Psoas muscle (tissue), 8 donors: ENCODE measurements at regions of chr13 and their contacts with region 1.

Region 1: DNA sequence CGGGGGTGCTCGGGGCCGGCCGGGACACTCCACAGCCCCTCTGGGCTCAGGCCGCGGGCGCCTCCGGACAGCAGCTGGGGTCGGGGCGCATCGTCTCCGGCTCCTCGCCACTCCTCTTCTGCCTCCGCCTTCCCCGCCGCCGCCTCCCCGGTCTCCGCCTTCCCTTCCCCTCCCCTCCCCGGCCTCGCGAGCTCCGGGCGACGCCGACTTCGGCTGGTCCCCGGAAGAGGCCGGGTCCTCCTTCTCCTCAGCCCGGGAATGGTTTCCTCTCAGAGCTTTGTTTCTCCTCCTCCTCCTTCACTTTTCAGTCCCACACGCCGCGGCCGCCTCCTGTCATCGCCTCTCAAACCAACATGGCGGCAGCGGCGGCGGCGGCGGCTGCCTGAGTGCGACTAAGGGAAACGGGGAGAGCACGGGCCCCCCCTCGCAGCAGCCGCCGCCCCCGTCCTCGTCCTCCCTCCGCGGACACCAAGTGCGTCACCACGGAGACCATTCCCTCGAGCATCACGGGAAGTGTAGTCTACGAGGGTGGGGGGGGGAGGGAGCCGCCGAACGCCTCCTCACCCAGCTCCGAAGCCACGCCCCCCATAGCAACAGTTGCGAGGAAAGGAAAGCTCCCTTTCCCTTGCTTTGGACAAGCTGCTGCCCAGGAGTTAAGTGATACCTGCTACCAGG is at the start of gene UBL3:
- DNase-seq: peak; percentile 96 to 98
- ATAC-seq: peak; percentile 95 to 98 (median 97)
- H3K4me3 ChIP-seq: peak within 1 kb of the TSS; percentile 92
- H3K27ac ChIP-seq: peak within 1 kb of the TSS; percentile 99
- H3K4me1 ChIP-seq: peaks cover 27% of the 10 kb centered on the region
- H3K27me3 ChIP-seq: no peaks in the 10 kb centered on the region
- CTCF ChIP-seq: no peak
- total RNA-seq, gene UBL3: 20.7 to 26.2 (median 24.5) TPM

Region 2: GRCh38 chr13:29508130-29508875 is 342.1 kb before region 1 on chr13:
- intact Hi-C with region 1: loop called in 1 of 2 experiments (anchors 10 kb)
- DNase-seq: peak; percentile 83 to 91
- ATAC-seq: peak; percentile 82 to 96 (median 88)
- H3K4me3 ChIP-seq: no peak overlapping the region
- H3K27ac ChIP-seq: no peak overlapping the region
- H3K4me1 ChIP-seq: peaks cover 5% of the 10 kb centered on the region
- H3K27me3 ChIP-seq: peaks cover 0 to 38% (median 13%) of the 10 kb centered on the region in 3 donors
- CTCF ChIP-seq: peak; percentile 97

Region 3: DNA sequence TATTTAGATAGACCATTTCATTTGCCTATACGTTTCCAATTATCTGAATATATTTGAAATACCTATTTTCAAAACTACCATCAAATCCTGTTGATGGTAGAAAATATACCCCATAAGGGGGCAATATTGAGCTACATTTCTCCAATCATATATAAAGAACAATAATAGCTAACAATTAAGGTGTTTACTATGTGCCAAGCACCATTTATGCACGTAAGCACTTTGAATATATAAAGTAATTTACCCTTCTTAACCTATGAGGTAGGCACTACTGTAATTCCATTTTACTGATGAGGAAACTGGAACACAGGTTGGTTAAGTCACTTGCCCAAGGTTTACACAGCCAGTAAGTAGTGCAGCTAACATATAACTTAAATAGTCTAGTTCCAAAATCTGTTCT is 79.1 kb before region 1 on chr13:
- intact Hi-C with region 1: loop called (anchors 5 kb)
- DNase-seq: no peak
- ATAC-seq: peak in 2 of 4 donors; percentile 35 to 67
- H3K4me3 ChIP-seq: no peak overlapping the region
- H3K27ac ChIP-seq: no peak overlapping the region
- H3K4me1 ChIP-seq: no peaks in the 10 kb centered on the region
- H3K27me3 ChIP-seq: no peaks in the 10 kb centered on the region
- CTCF ChIP-seq: peak; percentile 62

Region 4: DNA sequence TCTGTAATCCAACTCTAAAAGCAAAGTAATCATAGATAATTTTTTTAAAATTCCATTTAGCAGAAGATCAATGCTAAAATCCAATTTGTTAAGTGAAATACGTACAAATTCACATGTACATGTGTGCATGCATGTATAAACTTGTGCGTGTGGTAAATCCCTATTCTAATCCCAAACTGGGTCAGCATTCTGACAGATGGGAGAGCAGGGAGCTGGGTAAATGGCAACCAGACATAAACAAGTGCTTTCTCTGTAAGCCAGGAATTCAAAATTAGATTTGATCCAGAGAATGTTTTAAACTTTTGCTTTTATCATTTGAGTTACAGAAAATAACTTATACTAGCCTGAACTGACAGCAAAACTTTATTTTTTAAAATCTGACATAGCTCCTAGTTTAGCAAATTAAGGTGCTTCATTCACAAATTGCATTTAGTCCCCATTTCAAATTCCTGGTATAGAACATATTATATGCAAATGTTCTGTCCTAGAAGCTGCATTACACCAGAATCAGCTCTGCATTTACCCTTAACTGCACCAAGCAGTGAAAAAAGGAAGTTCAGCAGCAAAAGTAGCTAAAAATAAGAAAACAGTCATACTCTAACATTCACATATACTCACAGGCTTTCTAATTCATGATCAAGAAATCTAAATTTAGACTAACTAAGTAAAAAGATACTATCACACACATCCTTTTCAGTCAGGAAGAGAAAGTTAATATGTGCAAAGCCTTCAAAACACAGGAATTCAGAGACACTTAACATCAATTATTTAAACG is 32.6 kb before region 1 on chr13:
- intact Hi-C with region 1: no loop called
- DNase-seq: no peak
- ATAC-seq: peak; percentile 70 to 96 (median 83)
- H3K4me3 ChIP-seq: peak overlapping the region; percentile 44
- H3K27ac ChIP-seq: peak overlapping the region; percentile 70
- H3K4me1 ChIP-seq: peaks cover 78% of the 10 kb centered on the region
- H3K27me3 ChIP-seq: no peaks in the 10 kb centered on the region
- CTCF ChIP-seq: no peak

Region 5: DNA sequence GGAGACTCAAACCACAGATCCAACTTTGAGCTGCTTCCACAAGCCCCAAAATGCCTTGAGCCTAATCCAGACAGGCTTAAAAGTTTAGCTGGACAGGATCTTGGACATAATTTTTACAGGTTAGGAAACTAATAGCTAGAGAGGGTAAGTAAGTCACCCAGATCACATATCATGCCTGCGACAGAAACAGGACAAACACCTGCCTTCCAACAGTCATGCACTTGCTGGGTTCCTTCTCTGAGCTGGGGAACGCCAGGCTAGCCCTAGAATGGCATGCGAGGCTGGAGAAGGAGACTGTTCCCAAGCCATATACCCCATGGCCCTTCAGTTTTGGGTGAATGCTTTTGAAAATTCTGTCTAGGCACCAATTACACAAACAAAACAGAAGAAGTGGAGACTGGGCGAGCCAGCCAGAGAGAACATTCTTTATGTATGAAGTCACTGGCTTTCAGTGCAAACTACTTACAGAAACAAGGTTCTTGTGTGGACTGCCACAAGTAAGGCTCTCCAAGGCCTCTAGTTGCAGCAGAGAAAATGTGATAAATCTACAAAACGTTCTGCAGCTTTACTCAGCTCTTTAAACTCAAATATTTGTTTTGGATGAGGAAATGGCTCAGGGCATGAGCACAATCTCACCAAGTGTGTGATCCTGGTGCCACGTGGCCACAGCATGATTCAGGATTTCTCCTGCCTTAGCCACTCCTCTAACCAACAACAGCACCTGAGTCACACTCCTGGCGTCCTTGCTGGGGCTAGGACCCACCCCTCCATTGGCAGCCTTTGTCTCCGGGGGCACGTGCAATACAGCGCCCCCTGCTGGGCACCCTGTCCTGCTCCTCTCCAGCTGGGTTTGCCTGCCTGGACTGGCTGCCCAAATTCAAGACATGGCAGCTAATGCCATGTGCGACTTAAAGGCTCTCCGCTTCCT is 73.5 kb after region 1 on chr13:
- intact Hi-C with region 1: loop called in 1 of 2 experiments (anchors 5 kb)
- DNase-seq: peak; percentile 76 to 79
- ATAC-seq: peak; percentile 77 to 92 (median 86)
- H3K4me3 ChIP-seq: no peak overlapping the region
- H3K27ac ChIP-seq: peak overlapping the region; percentile 77
- H3K4me1 ChIP-seq: peaks cover 18% of the 10 kb centered on the region
- H3K27me3 ChIP-seq: no peaks in the 10 kb centered on the region
- CTCF ChIP-seq: peak; percentile 65